Endothelial cell of umbilical vein (primary cell): ENCODE measurements at regions of chrX and their contacts with region 1.

Region 1: GRCh38 chrX:118807151-118808017 is 16.2 kb upstream of the ZCCHC12 start:
- DNase-seq: peak; percentile 50
- H3K4me3 ChIP-seq: no peak overlapping the region
- H3K27ac ChIP-seq: no peak overlapping the region
- H3K4me1 ChIP-seq: peaks cover 10% of the 10 kb centered on the region
- H3K27me3 ChIP-seq: no peaks in the 10 kb centered on the region
- CTCF ChIP-seq: peak; percentile 49 to 59
- POLR2A ChIP-seq: no peak

Region 2: DNA sequence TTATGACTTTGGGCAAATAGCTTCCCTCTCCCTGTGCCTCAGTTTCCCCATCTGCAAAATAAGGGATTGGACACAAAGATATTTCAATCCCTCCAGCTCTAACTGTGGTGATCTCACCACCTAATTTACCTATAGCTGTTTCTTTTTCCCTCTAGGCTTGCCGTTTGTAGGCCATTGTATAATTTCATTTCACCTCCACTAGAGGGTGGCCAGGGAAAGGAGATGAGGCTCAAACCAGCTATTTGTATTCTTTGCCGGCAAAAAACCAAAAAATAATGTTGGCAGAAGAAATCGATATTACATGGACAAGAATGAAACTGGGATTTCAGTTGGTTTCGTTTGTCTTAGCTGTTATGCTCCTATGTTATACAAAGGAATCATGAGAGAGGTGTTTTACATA is 347.9 kb before region 1 on chrX:
- CTCF ChIA-PET with region 1: interaction called, 6 read pairs
- POLR2A ChIA-PET with region 1: no interaction called
- dilution Hi-C with region 1: no loop called
- intact Hi-C with region 1: loop called (anchors 10 kb)
- DNase-seq: peak; percentile 12
- H3K4me3 ChIP-seq: no peak overlapping the region
- H3K27ac ChIP-seq: no peak overlapping the region
- H3K4me1 ChIP-seq: no peaks in the 10 kb centered on the region
- H3K27me3 ChIP-seq: no peaks in the 10 kb centered on the region
- CTCF ChIP-seq: peak in 1 of 2 donors; percentile 29
- POLR2A ChIP-seq: no peak

Region 3: DNA sequence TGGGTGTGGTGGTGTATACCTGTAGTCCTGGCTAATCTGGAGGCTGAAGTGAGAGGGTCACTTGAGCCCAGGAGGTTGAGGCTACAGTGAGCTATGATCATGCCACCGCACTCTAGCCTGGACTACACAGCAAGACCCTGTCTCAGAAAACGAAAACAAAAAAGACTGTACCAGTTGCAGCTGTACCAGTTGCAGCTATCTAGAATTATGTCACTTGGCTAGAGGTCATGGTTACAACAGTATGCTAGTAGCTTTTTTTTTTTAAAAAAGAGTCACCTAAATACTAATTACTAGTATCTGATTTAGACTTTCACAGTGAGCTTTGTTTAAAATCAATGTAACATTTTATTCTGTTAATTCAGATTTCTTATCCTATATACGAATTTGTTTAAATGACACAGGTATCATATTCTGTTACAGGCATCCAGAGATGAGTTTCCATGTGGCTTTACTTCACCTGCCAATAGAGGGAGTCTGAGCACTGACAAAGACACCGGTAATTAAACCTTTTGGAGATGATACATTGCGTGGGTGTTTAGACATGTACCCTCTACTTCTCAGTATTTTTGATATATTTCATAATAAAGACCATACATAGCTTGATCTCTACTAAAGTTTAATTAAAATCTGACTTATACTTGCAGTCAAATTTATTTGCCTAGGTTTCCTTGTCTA is 180.2 kb before region 1 on chrX:
- CTCF ChIA-PET with region 1: interaction called, 31 read pairs
- POLR2A ChIA-PET with region 1: no interaction called
- dilution Hi-C with region 1: no loop called
- intact Hi-C with region 1: no loop called
- DNase-seq: peak; percentile 3
- H3K4me3 ChIP-seq: no peak overlapping the region
- H3K27ac ChIP-seq: no peak overlapping the region
- H3K4me1 ChIP-seq: no peaks in the 10 kb centered on the region
- H3K27me3 ChIP-seq: no peaks in the 10 kb centered on the region
- CTCF ChIP-seq: peak; percentile 3 to 11
- POLR2A ChIP-seq: no peak

Region 4: DNA sequence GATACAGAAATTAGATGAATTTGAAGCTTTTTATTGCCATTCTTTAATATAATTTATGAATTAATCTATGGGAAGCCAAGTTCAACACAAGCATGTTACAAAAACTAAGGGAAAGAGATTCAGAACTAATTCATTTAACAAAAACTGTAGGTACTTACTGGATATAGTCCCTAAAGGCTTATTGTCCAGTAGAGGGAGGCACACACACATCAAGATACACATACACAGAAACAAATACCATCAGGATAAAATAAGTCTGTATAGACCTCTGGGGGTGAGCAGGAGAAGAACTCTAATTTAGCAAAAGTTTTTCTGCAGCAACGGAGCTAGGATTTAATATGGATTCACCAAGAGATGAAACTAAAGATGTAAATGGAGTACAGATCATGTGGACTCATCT is 163.0 kb before region 1 on chrX:
- CTCF ChIA-PET with region 1: interaction called, 80 read pairs
- POLR2A ChIA-PET with region 1: no interaction called
- dilution Hi-C with region 1: no loop called
- intact Hi-C with region 1: loop called (anchors 1 kb)
- DNase-seq: peak; percentile 59
- H3K4me3 ChIP-seq: no peak overlapping the region
- H3K27ac ChIP-seq: no peak overlapping the region
- H3K4me1 ChIP-seq: no peaks in the 10 kb centered on the region
- H3K27me3 ChIP-seq: no peaks in the 10 kb centered on the region
- CTCF ChIP-seq: peak; percentile 11 to 25
- POLR2A ChIP-seq: no peak

Region 5: GRCh38 chrX:118761939-118762707 is 45.3 kb before region 1 on chrX:
- CTCF ChIA-PET with region 1: interaction called, 30 read pairs
- POLR2A ChIA-PET with region 1: no interaction called
- dilution Hi-C with region 1: no loop called
- intact Hi-C with region 1: loop called (anchors 1 kb)
- DNase-seq: no peak
- H3K4me3 ChIP-seq: no peak overlapping the region
- H3K27ac ChIP-seq: no peak overlapping the region
- H3K4me1 ChIP-seq: no peaks in the 10 kb centered on the region
- H3K27me3 ChIP-seq: no peaks in the 10 kb centered on the region
- CTCF ChIP-seq: no peak
- POLR2A ChIP-seq: no peak

Region 6: GRCh38 chrX:118928151-118928550 is 120.8 kb after region 1 on chrX:
- CTCF ChIA-PET with region 1: no interaction called
- POLR2A ChIA-PET with region 1: no interaction called
- dilution Hi-C with region 1: no loop called
- intact Hi-C with region 1: no loop called
- DNase-seq: peak; percentile 90
- H3K4me3 ChIP-seq: no peak overlapping the region
- H3K27ac ChIP-seq: no peak overlapping the region
- H3K4me1 ChIP-seq: peaks cover 8% of the 10 kb centered on the region
- H3K27me3 ChIP-seq: no peaks in the 10 kb centered on the region
- CTCF ChIP-seq: no peak
- POLR2A ChIP-seq: no peak